ENCODE measurements at regions of chr3 and their contacts with region 1.

Region 1: GRCh38 chr3:147191795-147192385 is 214.5 kb downstream of the ZIC4 start:
- DNase-seq: peak; percentile 17
- H3K4me3 ChIP-seq: no peak overlapping the region
- H3K27me3 ChIP-seq: no peaks in the 10 kb centered on the region
- CTCF ChIP-seq: peak; percentile 81

Region 2: DNA sequence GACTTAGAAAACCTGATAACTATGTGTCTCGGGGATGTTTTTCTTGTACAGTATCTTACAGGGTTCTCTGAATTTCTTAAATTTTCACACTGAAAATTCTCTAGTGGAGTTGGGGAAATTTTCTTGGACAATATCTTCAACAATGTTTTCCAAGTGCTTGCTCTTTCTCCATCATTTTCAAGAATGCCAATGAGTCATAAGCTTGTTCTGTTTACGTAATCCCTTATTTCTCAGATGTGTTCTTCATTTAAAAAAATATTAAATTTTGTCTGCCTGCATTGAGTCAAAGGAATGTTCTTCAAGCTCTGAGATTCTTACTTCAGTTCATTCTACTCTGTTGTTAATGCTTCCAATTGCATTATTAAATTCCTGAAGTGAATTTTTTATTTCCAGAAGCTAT is 700.6 kb before region 1 on chr3:
- CTCF ChIA-PET with region 1: no interaction called
- POLR2A ChIA-PET with region 1: no interaction called
- DNase-seq: no peak
- H3K4me3 ChIP-seq: no peak overlapping the region
- H3K27me3 ChIP-seq: no peaks in the 10 kb centered on the region
- CTCF ChIP-seq: no peak

Region 3: DNA sequence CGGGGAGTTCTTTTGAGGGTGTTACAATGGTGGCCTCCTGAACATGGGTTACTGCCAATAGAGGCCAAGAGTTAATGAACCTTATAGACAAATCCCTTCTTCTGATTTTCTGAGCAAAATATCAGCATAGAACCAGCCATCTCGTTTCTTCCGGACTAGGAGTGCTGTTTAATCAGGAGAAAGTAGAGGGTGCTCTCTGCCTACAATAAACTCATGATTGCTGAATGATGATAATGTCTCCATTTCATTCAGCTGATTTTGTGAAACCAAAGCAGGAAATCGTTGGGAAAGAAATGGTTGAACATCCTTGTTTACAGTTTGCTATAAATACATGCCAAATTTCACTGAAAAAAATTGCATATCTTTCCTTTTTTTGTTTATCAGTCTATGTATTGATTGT is 444.0 kb before region 1 on chr3:
- CTCF ChIA-PET with region 1: interaction called, 19 read pairs
- POLR2A ChIA-PET with region 1: no interaction called
- DNase-seq: peak; percentile 7
- H3K4me3 ChIP-seq: no peak overlapping the region
- H3K27me3 ChIP-seq: no peaks in the 10 kb centered on the region
- CTCF ChIP-seq: peak; percentile 60

Region 4: DNA sequence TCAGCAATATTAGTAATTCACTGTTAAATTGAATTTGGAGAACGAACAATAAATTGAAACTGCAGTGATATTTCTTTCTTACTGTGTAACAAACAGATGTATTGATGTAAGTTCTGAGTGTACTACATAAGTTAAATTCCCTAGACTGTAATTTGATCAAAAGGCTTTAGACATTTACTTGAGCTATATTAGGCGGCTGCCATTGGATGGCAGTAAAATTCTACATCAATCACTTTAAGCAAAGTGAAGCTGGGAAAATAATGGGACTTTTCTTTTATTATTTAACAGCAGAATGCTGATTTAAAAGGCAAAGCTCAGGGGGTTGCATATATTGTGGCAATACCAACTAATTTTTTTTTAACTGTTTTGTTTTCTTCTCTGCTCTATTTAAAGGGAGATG is 374.2 kb before region 1 on chr3:
- CTCF ChIA-PET with region 1: interaction called, 22 read pairs
- POLR2A ChIA-PET with region 1: no interaction called
- DNase-seq: no peak
- H3K4me3 ChIP-seq: no peak overlapping the region
- H3K27me3 ChIP-seq: no peaks in the 10 kb centered on the region
- CTCF ChIP-seq: peak; percentile 35

Region 5: DNA sequence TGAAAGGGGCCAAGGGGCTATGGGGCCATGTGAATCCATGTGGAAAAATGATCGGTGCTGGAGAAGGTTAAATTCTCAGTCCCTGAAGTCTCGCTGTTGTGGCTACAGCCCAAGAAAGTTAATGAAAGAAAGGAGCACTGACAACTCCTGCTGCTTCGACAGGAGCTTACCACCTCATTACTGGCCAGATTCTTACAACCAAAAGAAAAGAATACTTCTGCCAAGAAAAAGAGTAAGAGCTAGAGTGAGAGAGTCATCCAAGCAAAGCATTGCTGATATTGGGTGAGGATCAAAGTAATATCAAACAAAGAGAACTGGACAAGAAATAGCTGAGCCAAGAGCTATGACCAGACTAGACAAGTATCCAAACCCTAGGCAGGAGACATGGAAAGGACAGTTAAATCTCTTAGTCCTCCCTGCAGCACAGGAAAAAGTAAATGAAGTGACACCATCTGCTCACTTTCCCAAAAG is 238.3 kb before region 1 on chr3:
- CTCF ChIA-PET with region 1: no interaction called
- POLR2A ChIA-PET with region 1: no interaction called
- DNase-seq: no peak
- H3K4me3 ChIP-seq: no peak overlapping the region
- H3K27me3 ChIP-seq: no peaks in the 10 kb centered on the region
- CTCF ChIP-seq: no peak

Region 6: DNA sequence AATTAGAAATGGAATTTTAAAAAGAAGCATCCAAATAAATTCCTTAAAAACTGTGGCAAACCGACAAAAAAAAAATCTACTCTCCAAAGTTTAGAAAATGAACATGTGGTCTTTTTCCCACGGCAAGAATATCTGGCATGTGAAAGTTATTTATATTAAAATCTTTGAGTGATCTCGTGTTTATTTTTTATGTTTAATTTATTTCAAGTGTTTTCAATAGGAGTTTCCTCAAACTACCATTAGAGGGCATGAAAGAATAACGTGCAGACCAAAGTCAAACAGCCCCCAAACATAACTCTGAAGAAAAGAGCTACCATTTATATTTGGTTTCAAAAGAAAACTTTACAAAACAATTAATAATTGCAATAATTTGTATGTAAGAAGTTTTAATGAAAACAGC is 71.9 kb before region 1 on chr3:
- CTCF ChIA-PET with region 1: interaction called, 30 read pairs
- POLR2A ChIA-PET with region 1: no interaction called
- DNase-seq: peak; percentile 46
- H3K4me3 ChIP-seq: no peak overlapping the region
- H3K27me3 ChIP-seq: no peaks in the 10 kb centered on the region
- CTCF ChIP-seq: peak; percentile 59

Region 7: GRCh38 chr3:147130461-147130860 is 61.4 kb before region 1 on chr3:
- CTCF ChIA-PET with region 1: interaction called, 11 read pairs
- POLR2A ChIA-PET with region 1: no interaction called
- DNase-seq: peak; percentile 39
- H3K4me3 ChIP-seq: no peak overlapping the region
- H3K27me3 ChIP-seq: no peaks in the 10 kb centered on the region
- CTCF ChIP-seq: no peak

Region 8: DNA sequence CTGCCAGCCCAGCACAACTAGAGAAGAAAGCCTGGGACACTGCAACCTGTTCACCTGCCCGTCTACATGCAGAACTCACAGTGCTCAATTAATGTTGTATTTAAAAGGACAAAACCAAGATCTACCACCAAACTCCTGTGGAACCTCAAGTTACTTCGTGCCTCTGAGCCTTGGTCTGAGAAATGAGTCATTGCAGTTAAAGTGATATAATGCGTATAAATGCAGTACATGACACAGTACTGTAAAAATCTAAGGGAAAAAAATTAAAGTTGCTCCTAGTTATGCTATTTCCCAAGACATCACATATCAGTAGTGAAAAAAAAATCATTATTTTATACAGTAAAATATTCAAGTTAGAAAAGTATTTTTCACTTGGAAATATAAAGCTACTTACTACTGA is 75.5 kb after region 1 on chr3:
- CTCF ChIA-PET with region 1: no interaction called
- POLR2A ChIA-PET with region 1: no interaction called
- DNase-seq: no peak
- H3K4me3 ChIP-seq: no peak overlapping the region
- H3K27me3 ChIP-seq: no peaks in the 10 kb centered on the region
- CTCF ChIP-seq: no peak